ENCODE measurements at regions of chr2 and their contacts with region 1.

Region 1: DNA sequence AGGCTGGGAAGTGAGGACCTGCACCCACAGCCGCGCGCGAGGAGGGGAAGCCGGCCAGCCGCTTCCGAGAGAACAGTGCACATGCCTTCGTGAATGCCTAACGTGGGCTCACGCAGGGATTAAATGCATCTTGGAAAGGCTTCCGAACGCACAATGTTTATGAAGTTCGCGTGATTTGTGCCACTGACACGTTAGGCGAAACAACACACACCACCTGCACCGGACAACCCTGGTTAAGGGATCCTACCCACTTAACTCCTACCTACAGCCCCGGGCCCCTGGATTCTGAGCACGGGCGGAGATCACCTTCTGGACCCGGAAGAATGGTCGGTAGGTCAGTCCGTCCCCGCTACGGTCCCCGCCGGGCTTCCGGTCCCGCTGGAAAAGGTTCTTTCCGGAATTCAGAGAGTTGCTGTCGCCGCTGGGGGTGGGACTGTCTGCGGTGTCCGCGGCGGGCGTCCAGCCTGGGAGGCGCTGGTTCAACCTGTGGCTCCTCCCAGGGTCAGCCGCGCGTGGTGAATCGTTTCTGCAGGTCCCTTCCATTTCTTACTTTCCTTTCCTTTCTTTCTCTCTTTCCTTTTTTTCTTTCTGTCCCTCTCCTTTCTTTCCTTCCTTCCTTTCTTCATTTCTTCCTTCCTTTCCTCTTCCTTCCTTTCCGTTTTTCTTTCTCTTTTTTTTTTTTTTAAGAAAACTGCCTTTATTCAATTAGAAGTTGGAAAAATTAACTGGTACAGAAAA is at the start of gene MTIF2:
- DNase-seq: peak; percentile 89
- H3K4me3 ChIP-seq: peak within 1 kb of the TSS; percentile 13 to 78 (median 58)
- H3K27ac ChIP-seq: peak within 1 kb of the TSS; percentile 7
- H3K4me1 ChIP-seq: peaks cover 10% of the 10 kb centered on the region
- H3K27me3 ChIP-seq: no peaks in the 10 kb centered on the region
- CTCF ChIP-seq: no peak
- POLR2A ChIP-seq: peak; percentile 98
- total RNA-seq, gene MTIF2: 26.8 and 26.9 TPM in 2 replicates

Region 2: DNA sequence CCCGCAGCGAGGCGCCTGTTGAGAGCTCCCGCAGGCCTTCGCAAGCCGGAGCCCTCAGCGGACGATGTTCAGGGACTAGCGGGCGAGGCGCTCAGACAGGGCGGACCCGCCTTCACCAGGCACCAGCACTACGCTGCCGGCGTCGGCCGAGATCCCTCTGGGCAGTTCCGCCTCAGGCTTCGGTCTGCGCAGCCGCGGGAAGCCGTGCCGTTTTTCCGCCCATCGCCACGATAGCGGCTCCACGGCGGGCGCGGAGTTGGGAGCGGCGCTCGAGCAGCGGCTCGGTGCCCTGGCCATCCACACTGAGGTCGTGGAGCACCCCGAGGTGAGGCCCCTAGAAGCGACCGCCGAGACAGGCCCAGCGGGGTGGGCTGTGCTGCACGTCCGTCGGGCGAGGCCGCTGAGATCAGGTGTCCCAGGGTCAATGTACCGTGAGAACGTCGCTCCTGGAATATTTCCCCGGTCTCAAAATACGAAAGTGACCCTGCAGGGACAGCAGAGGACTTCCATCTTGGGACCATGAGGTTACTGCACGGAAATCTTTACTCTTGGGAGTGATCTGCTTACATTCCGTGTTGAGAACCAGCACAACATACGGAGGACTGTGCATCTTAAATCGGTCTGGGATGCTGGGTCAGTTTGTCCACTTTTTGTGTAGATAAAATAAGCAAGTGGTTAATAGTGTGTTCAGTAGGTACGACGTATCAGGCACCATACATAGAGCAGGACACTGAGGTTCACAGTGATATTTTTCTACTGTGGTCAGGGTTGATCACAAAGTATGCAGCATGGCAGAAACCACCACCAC is 13.2 kb after region 1 on chr2:
- CTCF ChIA-PET with region 1: interaction called, 4 read pairs
- POLR2A ChIA-PET with region 1: interaction called, 4 read pairs
- dilution Hi-C with region 1: no loop called
- intact Hi-C with region 1: loop called (anchors 1 kb)
- DNase-seq: peak; percentile 92
- H3K4me3 ChIP-seq: peak overlapping the region; percentile 52 to 89 (median 77)
- H3K27ac ChIP-seq: peak overlapping the region; percentile 49
- H3K4me1 ChIP-seq: no peaks in the 10 kb centered on the region
- H3K27me3 ChIP-seq: no peaks in the 10 kb centered on the region
- CTCF ChIP-seq: no peak
- POLR2A ChIP-seq: peak; percentile 98

Region 3: GRCh38 chr2:55311444-55311870 is 42.4 kb after region 1 on chr2:
- CTCF ChIA-PET with region 1: no interaction called
- POLR2A ChIA-PET with region 1: no interaction called
- dilution Hi-C with region 1: no loop called
- intact Hi-C with region 1: loop called (anchors 2 kb)
- DNase-seq: peak; percentile 7
- H3K4me3 ChIP-seq: no peak overlapping the region
- H3K27ac ChIP-seq: no peak overlapping the region
- H3K4me1 ChIP-seq: peaks cover 28% of the 10 kb centered on the region
- H3K27me3 ChIP-seq: no peaks in the 10 kb centered on the region
- CTCF ChIP-seq: no peak
- POLR2A ChIP-seq: no peak

Region 4: DNA sequence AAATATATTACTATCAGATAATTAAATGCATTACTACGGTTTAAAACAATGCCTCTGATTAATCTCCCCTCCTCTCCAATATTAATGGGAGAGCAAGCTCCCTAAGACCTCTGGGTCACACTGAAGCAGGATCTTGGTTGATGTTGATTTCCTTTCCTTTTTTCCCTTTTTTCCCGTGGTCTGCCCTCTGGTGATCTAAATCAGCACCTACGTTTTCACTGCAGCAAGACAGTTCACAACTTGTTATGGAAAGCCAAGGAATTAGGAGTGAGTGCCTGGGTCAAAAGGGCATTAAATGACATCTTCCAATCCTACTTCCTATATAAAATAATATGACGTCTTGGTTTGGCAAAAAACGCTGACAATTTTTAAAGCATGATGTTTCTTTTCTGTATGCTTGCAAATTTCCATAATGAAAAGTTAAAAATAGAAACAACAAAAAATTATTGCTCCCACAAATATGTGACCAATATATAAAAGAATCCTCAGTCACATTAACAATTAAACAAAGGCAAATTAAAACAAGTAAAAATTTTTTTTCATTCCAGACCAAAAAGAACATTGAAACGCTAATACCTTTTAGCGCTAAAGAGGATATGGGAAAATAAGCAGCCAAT is 242.5 kb after region 1 on chr2:
- CTCF ChIA-PET with region 1: no interaction called
- POLR2A ChIA-PET with region 1: no interaction called
- dilution Hi-C with region 1: no loop called
- intact Hi-C with region 1: loop called (anchors 5 kb)
- DNase-seq: peak; percentile 71
- H3K4me3 ChIP-seq: no peak overlapping the region
- H3K27ac ChIP-seq: no peak overlapping the region
- H3K4me1 ChIP-seq: no peaks in the 10 kb centered on the region
- H3K27me3 ChIP-seq: no peaks in the 10 kb centered on the region
- CTCF ChIP-seq: peak; percentile 23 to 44
- POLR2A ChIP-seq: no peak